ENCODE measurements at regions of chr3 and their contacts with region 1.

Region 1: DNA sequence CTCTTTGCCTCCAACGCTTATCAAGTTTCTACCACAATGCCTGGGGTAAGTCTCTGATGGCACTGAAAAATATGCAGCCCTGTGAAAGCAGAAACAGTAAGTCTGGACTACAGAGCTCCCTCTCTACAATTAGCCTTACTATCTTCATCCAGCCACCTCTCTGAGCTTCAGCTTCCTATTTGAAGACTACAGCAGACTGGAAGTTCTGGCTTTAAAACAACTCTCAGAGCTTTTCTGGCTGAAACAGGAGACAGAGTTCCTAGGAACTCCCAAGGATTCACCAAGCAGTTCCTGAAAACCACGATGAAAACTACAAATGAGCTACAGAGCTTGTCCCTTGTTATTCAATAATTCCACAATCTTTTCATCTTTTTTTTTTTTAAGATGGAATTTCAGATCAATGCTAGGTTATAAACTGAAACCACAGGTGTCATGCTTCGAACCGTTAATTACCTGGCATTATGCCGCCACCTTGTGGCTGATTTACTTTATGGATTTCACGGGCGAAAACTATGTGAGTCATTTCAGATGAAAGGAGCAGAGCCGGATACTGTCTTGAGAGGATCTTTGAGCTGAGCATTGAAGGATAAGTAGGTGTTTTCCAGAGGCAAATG is 3.9 kb downstream of the CRYGS start:
- H3K4me3 Mint-ChIP-seq: no peak overlapping the region
- H3K27ac Mint-ChIP-seq: peak overlapping the region; percentile 7
- H3K4me1 Mint-ChIP-seq: peaks cover 39% of the 10 kb centered on the region
- H3K27me3 Mint-ChIP-seq: no peaks in the 10 kb centered on the region

Region 2: DNA sequence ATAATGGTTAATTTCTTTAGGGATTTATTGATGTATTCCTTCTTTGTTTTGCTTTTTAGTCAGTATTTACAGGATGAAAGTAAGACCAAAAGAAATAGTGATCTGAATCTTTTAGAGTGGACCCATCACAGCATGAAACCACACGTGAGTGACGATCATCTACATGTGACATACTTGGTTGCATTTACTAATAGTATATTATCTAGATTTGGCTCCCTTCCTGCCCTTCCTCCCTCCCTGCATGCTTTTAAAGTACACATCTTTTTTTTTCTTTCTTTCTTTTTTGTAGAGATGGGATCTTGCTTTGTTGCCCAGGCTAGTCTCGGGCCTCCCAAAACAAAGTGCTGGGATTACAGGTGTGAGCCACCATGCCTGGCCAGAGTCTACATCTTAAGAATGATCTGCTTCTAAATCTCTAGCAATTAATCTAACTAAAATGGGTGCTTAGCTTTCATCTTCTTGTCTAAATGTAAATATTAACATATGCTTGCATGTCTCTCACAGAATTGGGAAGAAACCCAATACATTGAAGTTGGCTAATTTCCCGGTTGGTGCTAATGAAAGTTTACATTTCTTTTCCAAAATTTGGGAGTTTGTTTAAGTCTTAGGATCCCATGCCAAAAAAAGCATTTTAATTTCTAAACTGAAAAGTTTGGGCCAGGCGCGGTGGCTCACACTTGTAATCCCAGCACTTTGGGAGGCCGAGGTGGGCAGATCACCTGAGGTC is 916.2 kb before region 1 on chr3:
- intact Hi-C with region 1: no loop called
- H3K4me3 Mint-ChIP-seq: no peak overlapping the region
- H3K27ac Mint-ChIP-seq: no peak overlapping the region
- H3K4me1 Mint-ChIP-seq: no peaks in the 10 kb centered on the region
- H3K27me3 Mint-ChIP-seq: no peaks in the 10 kb centered on the region

Region 3: DNA sequence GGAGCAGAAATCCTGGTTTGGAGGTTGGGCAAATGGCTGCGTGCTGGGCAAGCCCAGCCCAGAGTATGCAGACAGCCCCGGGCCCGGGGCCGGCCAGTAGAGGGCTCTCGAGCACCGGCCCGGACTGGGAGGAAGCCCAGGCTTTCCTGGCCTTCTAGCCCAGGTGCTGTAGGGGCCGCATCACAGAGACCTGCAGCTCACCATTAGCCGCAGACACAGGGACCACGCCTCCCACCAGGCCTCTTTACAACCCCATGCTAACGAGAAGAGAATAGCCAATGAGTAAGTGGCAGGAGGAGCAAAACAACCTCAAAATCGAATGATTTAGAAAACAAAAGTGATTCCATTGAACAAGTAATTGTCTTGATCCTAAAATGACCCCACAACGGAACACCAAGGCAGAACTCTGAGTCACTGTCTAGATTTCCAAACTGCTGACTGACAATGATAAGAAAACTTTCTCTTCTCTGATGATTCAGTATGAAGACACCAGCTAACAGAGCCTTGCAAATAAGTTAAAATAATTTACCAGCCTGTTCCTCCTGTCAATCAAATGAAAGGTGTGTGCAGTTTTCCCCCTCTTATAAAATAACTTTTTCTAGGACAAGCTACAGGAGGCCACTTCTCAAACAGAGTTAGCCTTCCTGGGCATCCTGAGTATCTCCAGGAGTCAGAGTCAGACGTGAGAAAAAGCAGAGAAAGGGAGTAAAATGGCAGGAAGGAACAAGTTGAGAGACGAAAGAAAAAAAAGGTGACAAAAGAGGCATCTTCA is 280.5 kb before region 1 on chr3:
- intact Hi-C with region 1: loop called (anchors 1 kb)
- H3K4me3 Mint-ChIP-seq: no peak overlapping the region
- H3K27ac Mint-ChIP-seq: no peak overlapping the region
- H3K4me1 Mint-ChIP-seq: peaks cover 27% of the 10 kb centered on the region
- H3K27me3 Mint-ChIP-seq: no peaks in the 10 kb centered on the region

Region 4: DNA sequence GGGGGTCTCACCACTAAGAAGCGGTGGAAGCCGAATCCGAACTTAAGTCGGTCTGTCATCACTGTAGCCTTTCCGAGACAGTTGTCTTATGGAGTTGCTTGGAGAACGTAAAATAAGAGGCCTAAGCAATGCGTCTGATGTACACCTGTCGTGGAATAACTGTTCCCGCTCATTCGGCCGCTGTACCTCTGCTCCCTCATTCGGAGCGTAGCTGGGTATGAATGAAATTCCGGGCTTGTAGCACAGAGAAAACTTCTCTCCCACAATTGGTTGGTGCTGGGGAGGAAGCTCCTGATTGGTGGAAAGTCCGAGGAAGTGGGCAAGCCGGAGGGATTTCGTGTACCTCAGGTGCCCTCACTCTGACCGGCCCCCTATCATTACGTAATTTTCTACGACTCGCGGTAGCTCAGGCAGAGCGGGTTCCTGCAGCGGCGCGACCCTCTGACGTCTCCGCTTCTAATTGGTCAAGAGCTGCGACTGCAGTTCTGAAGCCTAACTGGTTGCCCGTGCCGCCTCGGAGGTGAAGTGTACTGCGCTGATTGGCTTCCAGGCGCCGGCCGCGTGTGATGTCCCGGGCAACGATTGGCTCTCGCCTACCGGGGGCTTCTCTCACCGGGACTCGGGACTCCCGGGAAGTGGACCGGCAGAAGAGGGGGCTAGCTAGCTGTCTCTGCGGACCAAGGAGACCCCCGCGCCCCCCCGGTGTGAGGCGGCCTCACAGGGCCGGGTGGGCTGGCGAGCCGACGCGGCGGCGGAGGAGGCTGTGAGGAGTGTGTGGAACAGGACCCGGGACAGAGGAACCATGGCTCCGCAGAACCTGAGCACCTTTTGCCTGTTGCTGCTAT is 30.0 kb after region 1 on chr3 and contains the start of gene DNAJB11:
- intact Hi-C with region 1: no loop called
- H3K4me3 Mint-ChIP-seq: peak within 1 kb of the TSS; percentile 86
- H3K27ac Mint-ChIP-seq: peak within 1 kb of the TSS; percentile 96
- H3K4me1 Mint-ChIP-seq: peaks cover 53% of the 10 kb centered on the region
- H3K27me3 Mint-ChIP-seq: no peaks in the 10 kb centered on the region

Measured in dendritic cell treated with granulocyte-macrophage colony-stimulating factor and Interleukin-4, amounts not matched to agents 40 ng/mL and 50 ng/mL, for 4 days (primary cell).